GM10248 (cell line): ENCODE measurements at regions of chr14 and their contacts with region 1.

Region 1: GRCh38 chr14:103391048-103391447 is 5.8 kb downstream of the MARK3 start:
- DNase-seq: peak; percentile 48
- CTCF ChIP-seq: peak; percentile 52

Region 2: DNA sequence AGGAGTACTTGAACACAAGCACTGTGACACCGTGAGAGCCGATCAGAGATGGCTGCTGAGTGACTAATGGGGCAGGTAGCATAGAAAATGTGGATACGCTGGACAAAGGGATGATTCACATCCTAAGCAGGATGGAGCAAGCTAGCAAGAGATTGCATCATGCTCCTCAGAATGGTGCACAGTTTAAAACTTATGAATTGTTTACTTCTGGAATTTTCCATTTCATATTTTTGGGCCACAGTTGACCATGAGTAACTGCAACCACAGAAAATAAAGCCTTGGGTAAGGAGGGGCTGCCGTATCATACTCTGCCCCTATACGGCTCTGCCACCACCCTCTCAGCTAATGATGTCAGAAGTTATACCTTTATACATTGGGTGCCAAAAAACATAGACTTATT is 29.2 kb before region 1 on chr14:
- CTCF ChIA-PET with region 1: interaction called, 30 read pairs
- POLR2A ChIA-PET with region 1: no interaction called
- DNase-seq: no peak
- CTCF ChIP-seq: no peak

Region 3: GRCh38 chr14:103378038-103378854 is 12.8 kb before region 1 on chr14:
- CTCF ChIA-PET with region 1: interaction called, 41 read pairs
- POLR2A ChIA-PET with region 1: no interaction called
- DNase-seq: no peak
- CTCF ChIP-seq: no peak

Region 4: GRCh38 chr14:103418481-103418818 is 27.4 kb after region 1 on chr14:
- CTCF ChIA-PET with region 1: interaction called, 87 read pairs
- POLR2A ChIA-PET with region 1: interaction called, 3 read pairs
- DNase-seq: peak; percentile 32
- CTCF ChIP-seq: no peak